Endothelial cell of umbilical vein (primary cell): ENCODE measurements at regions of chr1 and their contacts with region 1.

Region 1: DNA sequence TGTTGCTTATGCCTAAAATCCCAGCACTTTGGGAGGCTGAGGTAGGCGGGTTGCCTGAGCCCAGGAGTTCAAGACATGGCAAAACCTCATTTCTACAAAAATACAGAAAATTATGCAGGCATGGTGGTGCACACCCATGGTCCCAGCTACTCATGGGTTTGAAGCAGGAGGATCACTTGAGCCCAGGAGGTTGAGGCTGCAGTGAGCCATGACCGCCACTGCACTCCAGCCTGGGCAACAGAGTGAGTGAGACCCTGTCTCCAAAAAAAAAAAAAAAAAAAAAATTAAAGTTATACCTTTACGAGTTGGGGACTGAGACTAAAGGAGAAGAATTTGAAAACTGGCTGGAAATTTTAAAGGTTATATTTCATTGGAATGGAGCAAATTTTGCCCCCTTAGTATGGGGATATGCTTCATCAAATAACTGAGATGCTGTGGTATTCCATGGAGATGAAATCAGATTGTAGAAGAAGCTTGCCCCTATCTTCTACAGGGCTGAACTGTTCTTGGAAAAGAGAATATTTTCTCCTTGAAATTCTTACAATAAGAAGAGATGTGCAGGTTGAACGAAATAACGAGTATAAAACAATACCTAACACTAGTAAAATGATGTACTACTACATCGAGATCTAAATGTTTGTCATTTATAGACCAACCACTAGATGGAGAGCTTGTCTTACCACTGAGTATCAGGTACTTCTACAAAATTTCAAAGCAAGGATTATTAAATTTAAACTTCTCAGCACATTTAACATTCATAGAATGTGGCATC is 34.9 kb upstream of the SCYL3 start:
- DNase-seq: peak; percentile 55
- H3K4me3 ChIP-seq: no peak overlapping the region
- H3K27ac ChIP-seq: no peak overlapping the region
- H3K4me1 ChIP-seq: no peaks in the 10 kb centered on the region
- H3K27me3 ChIP-seq: no peaks in the 10 kb centered on the region
- CTCF ChIP-seq: peak; percentile 30 to 49
- POLR2A ChIP-seq: no peak

Region 2: DNA sequence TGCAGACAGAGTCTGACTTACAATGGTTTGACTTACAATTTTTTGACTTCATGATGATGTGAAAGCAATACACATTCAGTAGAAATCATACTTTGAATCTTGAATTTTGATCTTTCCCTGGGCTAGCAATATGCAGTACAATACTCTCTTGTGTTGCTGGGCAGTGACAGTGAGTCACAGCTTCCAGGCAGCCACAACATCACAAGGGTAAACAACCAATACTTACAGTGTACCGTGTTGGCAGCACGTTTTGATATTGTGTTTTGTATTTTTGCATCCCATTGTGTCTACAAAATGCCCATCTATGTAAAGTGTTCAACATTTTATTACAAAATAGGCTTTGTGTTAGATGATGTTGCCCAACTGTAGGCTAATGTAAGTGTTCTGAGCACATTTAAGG is 368.0 kb after region 1 on chr1:
- CTCF ChIA-PET with region 1: no interaction called
- POLR2A ChIA-PET with region 1: no interaction called
- dilution Hi-C with region 1: no loop called
- intact Hi-C with region 1: loop called (anchors 10 kb)
- DNase-seq: no peak
- H3K4me3 ChIP-seq: no peak overlapping the region
- H3K27ac ChIP-seq: no peak overlapping the region
- H3K4me1 ChIP-seq: no peaks in the 10 kb centered on the region
- H3K27me3 ChIP-seq: no peaks in the 10 kb centered on the region
- CTCF ChIP-seq: no peak
- POLR2A ChIP-seq: no peak

Region 3: GRCh38 chr1:170531758-170532657 is 603.4 kb after region 1 on chr1 and contains the start of gene GORAB:
- CTCF ChIA-PET with region 1: no interaction called
- POLR2A ChIA-PET with region 1: no interaction called
- dilution Hi-C with region 1: no loop called
- intact Hi-C with region 1: loop called (anchors 10 kb)
- DNase-seq: peak; percentile 94
- H3K4me3 ChIP-seq: peak within 1 kb of the TSS; percentile 50 to 78 (median 65)
- H3K27ac ChIP-seq: peak within 1 kb of the TSS; percentile 87
- H3K4me1 ChIP-seq: peaks cover 14% of the 10 kb centered on the region
- H3K27me3 ChIP-seq: peaks cover 5 to 12% of the 10 kb centered on the region in 2 experiments
- CTCF ChIP-seq: no peak
- POLR2A ChIP-seq: peak; percentile 79
- total RNA-seq, gene GORAB: 6.4 and 7.7 TPM in 2 replicates

Region 4: GRCh38 chr1:170692866-170693575 is 764.4 kb after region 1 on chr1:
- CTCF ChIA-PET with region 1: interaction called, 6 read pairs
- POLR2A ChIA-PET with region 1: no interaction called
- dilution Hi-C with region 1: no loop called
- intact Hi-C with region 1: loop called (anchors 1 kb)
- DNase-seq: peak; percentile 64
- H3K4me3 ChIP-seq: no peak overlapping the region
- H3K27ac ChIP-seq: peak overlapping the region; percentile 22
- H3K4me1 ChIP-seq: peaks cover 22% of the 10 kb centered on the region
- H3K27me3 ChIP-seq: no peaks in the 10 kb centered on the region
- CTCF ChIP-seq: no peak
- POLR2A ChIP-seq: no peak

Region 5: DNA sequence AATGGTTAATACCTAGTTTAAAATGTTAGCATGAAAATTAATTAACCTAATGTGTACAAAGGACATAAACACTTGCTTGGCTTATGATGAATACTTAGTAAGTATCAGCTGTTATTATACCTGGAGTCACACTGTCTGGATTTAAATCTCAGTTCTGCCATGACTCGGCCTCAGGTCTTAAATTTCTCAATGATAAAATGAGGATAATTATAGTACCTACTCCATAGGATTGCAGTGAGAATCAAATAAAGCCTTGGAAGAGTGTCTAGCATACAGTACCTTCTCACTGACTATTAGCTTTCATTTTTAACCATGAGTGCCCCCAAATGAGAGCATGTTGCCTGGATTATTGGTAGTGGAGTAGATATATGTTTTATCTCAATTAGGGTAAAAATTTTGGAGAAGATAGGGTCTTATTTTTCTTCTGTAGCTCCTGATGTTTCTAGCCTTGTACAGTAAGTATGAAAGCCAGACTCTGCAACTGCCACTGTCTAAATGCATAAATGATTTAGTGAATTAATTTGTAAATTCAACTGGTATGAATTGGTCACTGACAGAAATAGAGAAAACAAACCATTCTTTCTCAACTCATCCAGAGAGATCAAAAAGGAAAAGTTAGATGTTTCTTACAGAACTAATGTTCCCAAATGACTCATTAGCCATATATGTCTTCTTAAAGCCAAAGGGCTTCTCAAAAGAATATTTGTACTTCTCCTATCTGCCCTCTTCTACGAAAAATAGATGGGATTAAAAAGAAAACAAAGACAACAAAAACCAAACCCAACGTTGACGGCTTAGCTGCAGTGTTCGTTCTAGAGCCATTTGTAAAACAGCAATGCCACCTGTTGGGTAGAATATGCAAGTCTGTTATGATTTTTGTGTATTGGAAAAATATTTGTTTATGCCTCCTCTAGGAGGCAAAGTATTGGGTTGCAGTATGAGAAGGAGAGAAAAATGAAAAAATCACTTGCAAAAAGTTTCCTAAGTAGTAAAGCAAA is 952.9 kb after region 1 on chr1:
- CTCF ChIA-PET with region 1: no interaction called
- POLR2A ChIA-PET with region 1: no interaction called
- dilution Hi-C with region 1: no loop called
- intact Hi-C with region 1: loop called (anchors 2 kb)
- DNase-seq: peak; percentile 39
- H3K4me3 ChIP-seq: no peak overlapping the region
- H3K27ac ChIP-seq: no peak overlapping the region
- H3K4me1 ChIP-seq: no peaks in the 10 kb centered on the region
- H3K27me3 ChIP-seq: no peaks in the 10 kb centered on the region
- CTCF ChIP-seq: peak in 1 of 2 donors; percentile 19
- POLR2A ChIP-seq: no peak